ENCODE measurements at regions of chr1 and their contacts with region 1.

Region 1: GRCh38 chr1:117895482-117896114 is 33.8 kb downstream of the GDAP2 start:
- DNase-seq: peak in 1 of 2 experiments; percentile 64
- H3K4me3 ChIP-seq: no peak overlapping the region
- H3K27ac ChIP-seq: no peak overlapping the region
- H3K4me1 ChIP-seq: no peaks in the 10 kb centered on the region
- H3K27me3 ChIP-seq: no peaks in the 10 kb centered on the region
- CTCF ChIP-seq: peak in 2 of 3 experiments; percentile 60 to 69; a peak in 3 of 4 replicates
- EP300 ChIP-seq: no peak
- POLR2A ChIP-seq: no peak
- RAD21 ChIP-seq: peak; percentile 73 to 80

Region 2: DNA sequence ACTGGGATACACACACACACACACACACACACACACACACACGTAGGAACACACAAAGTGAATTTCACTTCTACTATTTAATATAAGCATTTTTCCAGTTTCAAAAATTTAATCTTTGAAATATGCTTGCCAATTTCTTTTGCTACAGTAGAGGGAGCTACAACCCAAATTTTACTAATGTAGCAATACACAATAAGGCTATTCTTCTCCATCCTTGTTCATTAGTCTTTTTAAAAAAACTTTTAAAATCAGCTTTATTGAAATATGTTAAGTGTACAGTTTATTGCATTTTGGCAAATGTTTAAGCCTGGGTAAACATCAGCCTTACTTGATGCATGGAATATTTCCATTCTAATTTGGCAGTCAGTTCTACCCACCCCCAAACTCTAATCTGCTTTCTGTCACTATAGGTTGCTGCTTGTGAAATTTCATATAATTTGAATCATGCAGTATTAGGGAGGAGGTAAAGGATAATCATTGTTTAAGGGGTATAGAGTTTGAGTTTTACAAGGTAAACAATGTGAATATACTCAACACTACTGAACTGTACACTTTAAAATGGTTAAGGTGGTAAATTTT is 382.8 kb before region 1 on chr1:
- CTCF ChIA-PET with region 1: interaction called, 17 read pairs
- POLR2A ChIA-PET with region 1: no interaction called
- DNase-seq: no peak
- H3K4me3 ChIP-seq: no peak overlapping the region
- H3K27ac ChIP-seq: no peak overlapping the region
- H3K4me1 ChIP-seq: no peaks in the 10 kb centered on the region
- H3K27me3 ChIP-seq: no peaks in the 10 kb centered on the region
- CTCF ChIP-seq: peak in 2 of 3 experiments; percentile 28 to 32; a peak in 2 of 4 replicates
- EP300 ChIP-seq: no peak
- POLR2A ChIP-seq: no peak
- RAD21 ChIP-seq: peak in 1 of 2 experiments; percentile 65; a peak in 3 of 4 replicates

Region 3: GRCh38 chr1:117710710-117711109 is 184.9 kb before region 1 on chr1:
- CTCF ChIA-PET with region 1: interaction called, 10 read pairs
- POLR2A ChIA-PET with region 1: no interaction called
- DNase-seq: peak in 1 of 2 experiments; percentile 54
- H3K4me3 ChIP-seq: no peak overlapping the region
- H3K27ac ChIP-seq: no peak overlapping the region
- H3K4me1 ChIP-seq: peaks cover 6 to 12% (median 9%) of the 10 kb centered on the region in 4 experiments
- H3K27me3 ChIP-seq: no peaks in the 10 kb centered on the region; a peak in 1 of 7 replicates
- CTCF ChIP-seq: peak; percentile 66 to 81 (median 67)
- EP300 ChIP-seq: no peak
- POLR2A ChIP-seq: no peak
- RAD21 ChIP-seq: peak; percentile 60 to 73

Region 4: DNA sequence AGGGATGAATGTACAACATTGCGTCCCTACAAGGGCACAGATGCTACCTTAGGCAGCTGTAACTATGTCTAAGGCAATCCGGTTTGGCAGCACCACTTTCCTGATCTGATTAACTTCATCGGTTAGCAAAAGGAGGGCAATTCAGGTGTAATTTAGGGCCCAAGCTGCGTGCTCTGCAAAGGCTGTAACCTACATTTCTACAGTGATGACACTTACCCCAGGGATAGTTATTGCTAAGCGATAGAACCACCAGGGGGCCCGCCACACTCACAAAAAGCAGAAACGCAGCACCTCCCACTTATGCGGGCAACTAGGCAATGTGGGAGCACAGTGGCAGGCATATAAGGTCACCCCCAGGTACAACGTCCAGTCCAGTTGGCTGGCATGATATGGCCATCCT is 79.7 kb before region 1 on chr1:
- CTCF ChIA-PET with region 1: interaction called, 15 read pairs
- POLR2A ChIA-PET with region 1: no interaction called
- DNase-seq: peak in 1 of 2 experiments; percentile 50
- H3K4me3 ChIP-seq: no peak overlapping the region
- H3K27ac ChIP-seq: no peak overlapping the region
- H3K4me1 ChIP-seq: no peaks in the 10 kb centered on the region; a peak in 2 of 7 replicates
- H3K27me3 ChIP-seq: no peaks in the 10 kb centered on the region
- CTCF ChIP-seq: peak in 2 of 3 experiments; percentile 1 to 26; a peak in 2 of 4 replicates
- EP300 ChIP-seq: no peak
- POLR2A ChIP-seq: no peak
- RAD21 ChIP-seq: peak; percentile 40 to 48

Region 5: DNA sequence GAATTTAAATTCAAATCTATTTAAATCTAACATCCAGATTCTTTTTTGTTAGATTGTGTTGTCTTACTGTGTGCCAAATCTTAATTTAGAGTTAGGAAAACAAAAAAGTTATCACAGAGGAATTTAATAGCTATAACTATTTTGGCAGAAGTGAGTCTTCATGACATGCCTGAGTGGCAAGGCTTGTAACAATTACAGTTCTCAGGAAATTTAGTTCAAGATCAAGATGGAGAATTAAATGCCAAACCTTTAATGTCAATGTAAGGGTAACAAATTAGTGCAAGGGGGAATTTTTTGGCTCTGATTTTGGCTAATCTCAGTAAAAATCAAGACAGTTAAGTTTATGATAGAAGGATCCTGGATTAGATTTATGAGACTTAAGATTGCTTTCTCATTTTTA is 24.6 kb before region 1 on chr1:
- CTCF ChIA-PET with region 1: interaction called, 13 read pairs
- POLR2A ChIA-PET with region 1: no interaction called
- DNase-seq: no peak
- H3K4me3 ChIP-seq: no peak overlapping the region
- H3K27ac ChIP-seq: no peak overlapping the region
- H3K4me1 ChIP-seq: no peaks in the 10 kb centered on the region
- H3K27me3 ChIP-seq: no peaks in the 10 kb centered on the region
- CTCF ChIP-seq: no peak
- EP300 ChIP-seq: no peak
- POLR2A ChIP-seq: no peak
- RAD21 ChIP-seq: no peak

Region 6: DNA sequence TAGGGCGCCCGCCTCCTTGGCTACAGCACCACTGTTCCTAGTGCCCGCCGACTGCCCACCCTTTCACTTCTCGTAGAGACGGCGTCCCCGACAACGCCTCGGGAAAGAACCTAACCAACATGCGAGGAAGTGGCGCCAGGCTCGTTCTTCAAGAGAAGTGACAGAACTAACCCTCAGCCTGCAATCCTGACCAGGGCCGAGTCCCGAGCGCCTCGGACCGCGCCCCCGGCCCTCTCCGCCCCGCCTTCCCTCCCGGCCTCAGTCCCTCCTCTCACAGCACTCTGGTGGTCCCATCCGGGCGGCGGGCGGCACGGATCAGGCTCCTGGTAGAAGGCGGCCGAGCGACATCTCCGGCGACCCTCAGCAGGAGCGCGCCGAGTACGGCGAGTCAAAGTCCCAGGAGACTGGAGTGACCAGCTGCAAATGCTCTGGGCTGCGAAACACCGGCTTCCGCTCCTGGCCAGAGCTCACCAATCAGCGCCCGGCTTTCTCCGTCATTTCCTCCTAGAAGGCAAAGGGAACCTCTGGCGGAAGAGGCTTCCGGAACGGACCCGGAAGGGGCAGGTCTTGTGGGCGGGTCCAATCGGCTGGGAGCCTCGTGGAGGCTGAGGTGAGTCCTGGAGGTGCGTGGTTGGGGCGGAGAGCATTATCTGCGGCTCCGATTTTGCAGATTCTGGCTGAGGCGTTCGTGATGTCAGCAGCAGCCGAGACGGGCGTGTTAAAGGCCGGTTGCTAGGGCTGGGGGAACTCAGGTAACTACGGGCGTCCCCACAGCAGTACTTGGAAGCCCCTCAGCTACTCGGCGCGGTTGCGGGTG is 33.8 kb after region 1 on chr1 and contains the starts of genes GDAP2 and WDR3:
- CTCF ChIA-PET with region 1: interaction called, 14 read pairs
- POLR2A ChIA-PET with region 1: no interaction called
- DNase-seq: peak; percentile 89 to 92
- H3K4me3 ChIP-seq: peak within 1 kb of the TSS; percentile 86 to 98 (median 92)
- H3K27ac ChIP-seq: no peak within 1 kb of the TSS
- H3K4me1 ChIP-seq: peaks cover 0 to 8% (median 3%) of the 10 kb centered on the region in 4 experiments; a peak in 4 of 7 replicates
- H3K27me3 ChIP-seq: no peaks in the 10 kb centered on the region
- CTCF ChIP-seq: no peak
- EP300 ChIP-seq: no peak
- POLR2A ChIP-seq: peak in 1 of 2 experiments; percentile 56; a peak in 1 of 3 replicates
- RAD21 ChIP-seq: no peak
- total RNA-seq, gene GDAP2: 25.4 and 27.8 TPM in 2 replicates
- total RNA-seq, gene WDR3: 62.4 and 67.9 TPM in 2 replicates

Measured in H1 (cell line).